Spleen (tissue), 13 donors: ENCODE measurements at regions of chr19 and their contacts with region 1.

Region 1: GRCh38 chr19:6125571-6125989 is 9.9 kb upstream of the ACSBG2 start:
- DNase-seq: no peak
- H3K4me3 ChIP-seq: no peak overlapping the region
- H3K27ac ChIP-seq: no peak overlapping the region
- H3K4me1 ChIP-seq: no peaks in the 10 kb centered on the region
- H3K27me3 ChIP-seq: peaks cover 0 to 5% (median 0%) of the 10 kb centered on the region in 7 donors
- CTCF ChIP-seq: peak; percentile 81 to 96 (median 94)
- POLR2A ChIP-seq: no peak

Region 2: GRCh38 chr19:6048808-6049405 is 76.7 kb before region 1 on chr19:
- intact Hi-C with region 1: loop called (anchors 2 kb)
- DNase-seq: peak; percentile 91
- H3K4me3 ChIP-seq: no peak overlapping the region
- H3K27ac ChIP-seq: no peak overlapping the region
- H3K4me1 ChIP-seq: peaks cover 0 to 18% (median 11%) of the 10 kb centered on the region in 6 donors
- H3K27me3 ChIP-seq: no peaks in the 10 kb centered on the region
- CTCF ChIP-seq: peak; percentile 69 to 91 (median 86)
- POLR2A ChIP-seq: no peak